Activated B cell treated with CpG ODN at 0.5 μM for 24 hours (primary cell): ENCODE measurements at regions of chr12 and their contacts with region 1.

Region 1: DNA sequence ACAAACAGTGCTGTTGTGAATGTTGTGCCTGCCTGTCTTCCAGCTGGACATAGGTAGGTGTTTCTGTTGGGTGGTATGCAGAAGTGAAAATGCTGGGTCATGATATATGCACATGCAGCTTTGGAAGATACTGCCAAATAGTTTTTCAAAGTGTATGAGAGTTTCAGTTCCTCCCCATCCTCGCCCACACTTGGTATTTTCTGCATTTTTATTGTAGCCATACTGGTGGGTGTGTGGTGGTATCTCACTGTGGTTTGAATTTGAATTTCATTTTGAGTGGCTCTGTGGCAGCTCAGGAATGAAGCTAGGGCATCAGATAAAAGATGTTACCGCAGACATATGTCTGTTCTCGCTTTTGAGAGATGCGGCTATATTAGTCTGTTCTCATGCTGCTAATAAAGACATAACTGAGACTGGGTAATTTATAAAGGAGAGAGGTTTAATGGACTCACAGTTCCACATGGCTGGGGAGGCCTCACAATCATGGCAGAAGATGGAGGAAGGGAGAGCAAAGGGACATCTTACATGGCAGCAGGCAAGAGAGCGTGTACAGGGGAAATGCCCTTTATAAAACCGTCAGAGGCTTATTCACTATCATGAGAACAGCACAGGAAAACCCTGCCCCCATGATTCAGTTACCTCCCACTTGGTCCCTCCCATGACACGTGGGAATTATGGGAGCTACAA is 183.1 kb downstream of the CAND1 start:
- DNase-seq: no peak
- ATAC-seq: peak; percentile 60
- H3K4me3 Mint-ChIP-seq: peak overlapping the region; percentile 17
- H3K27ac Mint-ChIP-seq: peak overlapping the region; percentile 54
- H3K4me1 Mint-ChIP-seq: peaks cover 40% of the 10 kb centered on the region
- H3K27me3 Mint-ChIP-seq: peaks cover 12% of the 10 kb centered on the region
- CTCF ChIP-seq: no peak

Region 2: DNA sequence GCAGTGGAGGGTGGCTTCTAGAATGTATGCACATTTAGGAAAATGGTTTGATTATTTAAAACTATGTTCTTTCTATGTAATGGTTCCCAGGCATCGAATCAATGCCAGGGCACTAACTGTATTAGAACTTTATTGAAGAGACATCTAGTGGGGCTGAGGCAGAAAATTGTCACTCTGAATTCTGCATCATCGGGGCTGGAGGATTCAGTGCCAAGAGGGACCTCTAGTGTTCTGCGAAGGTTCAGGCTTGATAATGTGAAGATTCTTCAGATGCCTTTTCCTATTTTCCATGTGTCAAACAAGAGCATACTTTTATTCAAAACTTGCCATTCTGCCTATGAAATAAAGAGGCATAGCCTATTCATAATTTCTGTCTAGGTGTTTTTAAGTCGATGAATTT is 36.8 kb before region 1 on chr12:
- CTCF ChIA-PET with region 1: no interaction called
- POLR2A ChIA-PET with region 1: no interaction called
- intact Hi-C with region 1: no loop called
- DNase-seq: no peak
- ATAC-seq: no peak
- H3K4me3 Mint-ChIP-seq: no peak overlapping the region
- H3K27ac Mint-ChIP-seq: no peak overlapping the region
- H3K4me1 Mint-ChIP-seq: no peaks in the 10 kb centered on the region
- H3K27me3 Mint-ChIP-seq: no peaks in the 10 kb centered on the region
- CTCF ChIP-seq: no peak

Region 3: DNA sequence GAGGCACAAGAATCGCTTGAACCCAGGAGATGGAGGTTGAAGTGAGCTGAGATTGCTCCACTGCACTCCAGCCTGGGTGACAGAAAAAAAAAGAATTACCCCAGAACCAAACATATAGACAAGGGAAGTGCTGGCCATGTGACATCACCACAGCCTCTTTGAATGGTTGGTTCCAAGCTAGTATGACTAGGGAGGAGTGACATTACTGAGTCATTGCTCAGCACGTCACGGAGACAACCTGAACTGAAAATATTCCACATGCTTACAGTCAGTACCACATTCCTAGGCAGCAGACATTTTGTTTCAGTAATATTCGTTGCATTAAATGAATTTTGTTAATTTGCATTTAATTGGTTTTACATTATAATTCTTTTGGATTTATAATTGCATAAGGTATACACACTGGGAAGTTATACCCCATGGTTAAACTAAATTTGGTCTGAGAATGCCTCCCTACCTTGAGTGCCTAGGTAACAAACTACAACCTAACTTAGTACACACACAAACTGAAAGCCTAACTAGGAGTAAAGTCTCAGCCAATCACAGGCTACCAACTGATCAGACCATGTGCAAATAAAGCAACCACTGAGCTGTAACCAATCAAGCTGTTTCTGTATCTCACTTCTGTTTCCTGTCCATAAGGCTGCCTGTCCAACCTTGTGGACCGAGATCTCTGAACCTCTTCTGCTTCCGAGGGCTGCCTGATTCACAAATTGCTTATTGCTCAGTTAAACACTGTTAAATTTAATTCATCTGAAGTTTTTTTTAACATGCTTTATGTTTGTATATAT is 18.7 kb before region 1 on chr12:
- CTCF ChIA-PET with region 1: interaction called, 3 read pairs
- POLR2A ChIA-PET with region 1: no interaction called
- intact Hi-C with region 1: loop called (anchors 2 kb)
- DNase-seq: no peak
- ATAC-seq: peak; percentile 94
- H3K4me3 Mint-ChIP-seq: no peak overlapping the region
- H3K27ac Mint-ChIP-seq: no peak overlapping the region
- H3K4me1 Mint-ChIP-seq: peaks cover 13% of the 10 kb centered on the region
- H3K27me3 Mint-ChIP-seq: no peaks in the 10 kb centered on the region
- CTCF ChIP-seq: no peak

Region 4: DNA sequence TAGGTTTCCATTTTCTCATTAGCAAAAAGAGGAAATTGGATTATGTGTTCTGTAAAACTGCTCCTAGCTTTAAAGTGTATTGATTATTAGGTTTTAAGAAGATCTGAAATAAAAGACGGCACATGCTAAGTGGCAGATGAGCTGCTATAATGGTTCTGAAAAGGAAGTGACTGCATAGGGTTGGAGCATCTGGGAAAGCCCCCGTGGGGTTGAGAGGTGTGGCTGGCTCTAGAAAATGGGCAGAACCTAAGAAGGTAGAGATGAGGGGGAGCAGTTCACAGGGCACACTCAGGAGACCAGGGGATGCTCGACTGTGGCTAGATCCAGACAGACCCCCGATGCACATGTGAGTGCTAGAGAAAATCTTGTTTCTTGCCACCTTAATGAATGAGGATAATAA is 538.9 kb after region 1 on chr12:
- CTCF ChIA-PET with region 1: no interaction called
- POLR2A ChIA-PET with region 1: interaction called, 5 read pairs
- intact Hi-C with region 1: loop called (anchors 5 kb)
- DNase-seq: peak; percentile 32
- ATAC-seq: peak; percentile 90
- H3K4me3 Mint-ChIP-seq: peak overlapping the region; percentile 74
- H3K27ac Mint-ChIP-seq: peak overlapping the region; percentile 94
- H3K4me1 Mint-ChIP-seq: peaks cover 69% of the 10 kb centered on the region
- H3K27me3 Mint-ChIP-seq: no peaks in the 10 kb centered on the region
- CTCF ChIP-seq: no peak